SK-N-SH (cell line): ENCODE measurements at regions of chr11 and their contacts with region 1.

Region 1: DNA sequence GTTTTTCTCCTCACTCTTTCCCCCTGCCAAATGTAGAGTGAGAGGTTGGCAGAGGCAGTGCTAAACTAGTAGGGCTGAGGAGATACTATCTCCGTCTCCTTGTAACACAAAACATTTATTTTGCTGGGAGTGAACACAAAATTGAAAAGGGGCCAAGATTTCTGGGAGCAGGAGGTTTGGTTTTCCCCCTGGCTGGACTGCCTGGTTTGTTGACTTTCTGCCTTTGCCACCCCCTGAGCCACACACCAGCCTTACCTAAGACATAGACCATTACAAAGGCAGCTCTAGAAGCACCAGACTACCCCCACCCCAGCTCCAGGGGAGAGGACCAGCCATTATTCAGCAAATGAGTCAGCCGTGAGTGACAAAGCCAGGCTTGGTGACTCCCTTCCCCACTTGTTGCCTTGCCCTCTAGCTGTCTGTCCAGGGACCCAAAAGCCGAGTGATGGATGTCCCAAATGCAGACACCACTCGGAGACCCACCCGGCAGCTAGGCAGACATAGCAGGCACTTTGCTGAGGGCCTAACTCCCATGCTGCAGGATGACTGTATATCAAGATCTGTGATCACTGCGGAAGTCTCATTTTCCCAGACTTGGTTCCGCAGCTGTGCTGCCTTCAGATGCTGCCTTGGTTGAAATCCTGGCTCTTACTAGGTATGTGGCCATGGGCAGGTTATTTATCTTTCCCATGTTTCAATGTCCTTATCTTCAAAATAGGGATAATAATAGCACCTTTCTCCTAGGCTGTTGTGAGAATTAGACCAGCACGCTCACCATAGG is 17.7 kb upstream of the CDON start:
- DNase-seq: peak; percentile 72
- H3K4me3 ChIP-seq: no peak overlapping the region
- H3K27ac ChIP-seq: peak overlapping the region; percentile 38 to 94
- H3K4me1 ChIP-seq: peaks cover 10 to 53% of the 10 kb centered on the region in 2 experiments; a peak in 3 of 4 replicates
- H3K27me3 ChIP-seq: no peaks in the 10 kb centered on the region
- CTCF ChIP-seq: no peak
- EP300 ChIP-seq: peak in 1 of 2 experiments; percentile 33; a peak in 2 of 4 replicates
- RAD21 ChIP-seq: no peak; the same call in 1 of the 2 replicates

Region 2: GRCh38 chr11:126102436-126102981 is 22.2 kb after region 1 on chr11:
- CTCF ChIA-PET with region 1: interaction called, 16 read pairs
- POLR2A ChIA-PET with region 1: interaction called, 4 read pairs
- DNase-seq: peak; percentile 68
- H3K4me3 ChIP-seq: no peak overlapping the region
- H3K27ac ChIP-seq: peak overlapping the region in 1 of 2 experiments; percentile 93; a peak in 2 of 4 replicates
- H3K4me1 ChIP-seq: peaks cover 6 to 70% of the 10 kb centered on the region in 2 experiments; a peak in 3 of 4 replicates
- H3K27me3 ChIP-seq: no peaks in the 10 kb centered on the region
- CTCF ChIP-seq: no peak
- EP300 ChIP-seq: peak in 1 of 2 experiments; percentile 31; a peak in 1 of 4 replicates
- RAD21 ChIP-seq: no peak

Region 3: GRCh38 chr11:126211235-126212088 is 131.1 kb after region 1 on chr11 and contains the starts of genes FAM118B and RPUSD4:
- CTCF ChIA-PET with region 1: no interaction called
- POLR2A ChIA-PET with region 1: no interaction called
- DNase-seq: peak; percentile 99
- H3K4me3 ChIP-seq: peak within 1 kb of the TSS; percentile 82 to 96
- H3K27ac ChIP-seq: peak within 1 kb of the TSS; percentile 62 to 70; a peak in 3 of 4 replicates
- H3K4me1 ChIP-seq: peaks cover 9 to 11% of the 10 kb centered on the region in 2 experiments
- H3K27me3 ChIP-seq: no peaks in the 10 kb centered on the region
- CTCF ChIP-seq: no peak
- EP300 ChIP-seq: no peak
- RAD21 ChIP-seq: no peak
- polyA plus RNA-seq, gene FAM118B: 19.5 and 27.8 TPM in 2 replicates
- polyA plus RNA-seq, gene RPUSD4: 18.0 and 24.0 TPM in 2 replicates